Thyroid gland (tissue), 4 donors: ENCODE measurements at regions of chr18 and their contacts with region 1.

Region 1: GRCh38 chr18:34322365-34323289 is 97.9 kb upstream of the NOL4 start:
- DNase-seq: peak; percentile 72 to 78
- H3K4me3 ChIP-seq: no peak overlapping the region
- H3K27ac ChIP-seq: no peak overlapping the region
- H3K4me1 ChIP-seq: no peaks in the 10 kb centered on the region
- H3K27me3 ChIP-seq: no peaks in the 10 kb centered on the region
- CTCF ChIP-seq: peak; percentile 31 to 74 (median 56)
- POLR2A ChIP-seq: no peak

Region 2: DNA sequence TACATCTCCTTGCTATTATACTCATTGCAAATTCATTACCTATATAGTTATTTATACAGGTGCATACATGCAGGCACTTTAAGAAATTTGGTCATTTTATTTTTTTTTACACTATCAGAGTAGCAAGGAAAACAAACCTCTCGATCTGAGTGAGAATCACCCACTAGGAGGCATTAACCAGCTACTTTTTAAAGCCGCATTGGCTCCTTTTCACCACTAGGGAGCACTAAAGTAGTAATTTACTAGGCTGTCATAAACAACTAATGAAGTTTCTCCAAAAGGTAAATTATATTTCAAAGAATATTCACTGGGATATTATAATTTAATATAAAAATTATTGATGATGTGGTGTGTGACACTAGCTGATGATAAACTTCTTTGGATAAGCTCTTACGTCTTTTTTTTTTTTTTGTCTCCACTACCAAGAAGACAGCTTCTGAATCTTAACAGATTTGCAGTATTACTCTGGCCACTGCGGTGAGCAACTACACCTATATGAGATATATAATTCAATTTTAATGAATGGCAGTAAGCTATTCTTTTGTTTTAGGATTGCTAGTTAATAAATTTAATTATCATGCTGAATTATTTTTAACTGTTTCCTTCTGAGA is 199.8 kb before region 1 on chr18:
- intact Hi-C with region 1: loop called (anchors 10 kb)
- DNase-seq: peak; percentile 9 to 20
- H3K4me3 ChIP-seq: no peak overlapping the region
- H3K27ac ChIP-seq: no peak overlapping the region
- H3K4me1 ChIP-seq: no peaks in the 10 kb centered on the region
- H3K27me3 ChIP-seq: no peaks in the 10 kb centered on the region
- CTCF ChIP-seq: peak; percentile 58 to 95 (median 76)
- POLR2A ChIP-seq: no peak

Region 3: GRCh38 chr18:34261865-34262780 is 60.5 kb before region 1 on chr18:
- intact Hi-C with region 1: no loop called
- DNase-seq: no peak
- H3K4me3 ChIP-seq: no peak overlapping the region
- H3K27ac ChIP-seq: no peak overlapping the region
- H3K4me1 ChIP-seq: no peaks in the 10 kb centered on the region
- H3K27me3 ChIP-seq: no peaks in the 10 kb centered on the region
- CTCF ChIP-seq: no peak
- POLR2A ChIP-seq: no peak